ENCODE measurements at regions of chr7 and their contacts with region 1.

Region 1: DNA sequence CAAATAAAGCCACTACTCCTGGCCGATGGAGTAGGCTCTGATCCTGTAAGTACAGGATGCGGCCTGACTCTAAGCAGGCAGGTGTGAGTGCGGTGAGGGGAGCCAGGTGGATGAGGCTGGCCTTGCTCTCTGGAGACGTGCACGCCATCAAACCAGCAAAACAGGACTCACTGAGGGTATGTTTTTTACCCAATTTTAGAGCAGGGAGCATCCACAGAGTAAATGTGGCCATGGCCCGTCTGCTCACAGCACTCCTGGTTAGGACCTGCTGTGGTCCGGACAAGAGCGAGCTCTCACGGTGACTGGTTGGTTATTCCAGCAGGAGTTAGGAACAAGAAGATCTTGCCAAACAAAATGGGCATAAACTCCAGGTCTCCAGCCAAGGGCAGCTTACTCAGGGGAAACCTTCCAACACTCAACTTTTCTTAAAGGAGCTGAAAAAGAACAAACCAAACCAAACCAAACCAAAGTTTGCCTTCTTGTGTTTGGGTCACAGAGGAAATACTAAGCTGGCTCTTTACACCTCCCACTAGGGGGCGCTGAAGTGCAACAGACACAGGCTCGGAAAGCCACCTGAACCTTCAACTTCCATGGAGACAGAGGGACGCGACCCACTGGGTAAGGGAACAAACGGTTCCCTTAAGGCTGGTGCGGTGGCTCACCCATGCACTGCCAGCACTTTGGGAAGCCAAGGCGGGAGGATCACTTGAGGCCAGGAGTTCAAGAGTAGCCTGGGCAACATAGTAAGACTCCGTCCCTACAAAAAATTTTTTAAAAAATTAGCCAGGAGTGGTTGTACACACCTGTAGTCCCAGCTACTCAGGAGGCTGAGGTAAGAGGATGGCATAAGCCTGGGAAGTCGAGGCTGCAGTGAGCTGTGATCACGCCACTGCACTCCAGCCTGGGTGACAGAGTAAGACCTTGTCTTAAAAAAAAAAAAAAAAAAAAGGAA is 122.4 kb downstream of the CLEC2L start:
- DNase-seq: peak; percentile 75

Region 2: DNA sequence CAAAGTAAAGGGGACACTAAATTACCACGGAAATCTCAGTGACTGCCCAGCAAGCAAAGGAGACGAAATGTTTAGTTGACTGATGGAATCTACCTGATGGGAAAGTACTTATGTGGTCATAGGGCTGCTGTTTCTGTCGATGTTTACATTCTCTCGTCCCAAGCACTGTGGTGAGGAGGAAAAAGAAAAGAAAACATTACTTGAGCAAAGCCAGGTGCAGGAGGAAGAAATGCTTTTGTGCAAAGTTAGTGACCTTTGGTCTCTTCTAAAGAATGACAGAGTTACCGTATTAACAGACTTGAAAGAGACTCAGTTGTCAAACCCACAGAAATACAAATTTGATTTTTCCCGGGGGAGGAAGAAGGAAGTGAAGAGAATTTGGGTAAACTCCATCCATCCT is 348.1 kb before region 1 on chr7:
- in situ Hi-C with region 1: no loop called
- DNase-seq: no peak

Region 3: GRCh38 chr7:140003913-140004382 is 358.1 kb after region 1 on chr7:
- in situ Hi-C with region 1: loop called (anchors 25 kb)
- DNase-seq: peak; percentile 76